Thyroid gland (tissue), 4 donors: ENCODE measurements at regions of chr6 and their contacts with region 1.

Region 1: GRCh38 chr6:170295510-170296422 is 4.9 kb upstream of the DLL1 start:
- DNase-seq: peak in 1 of 2 donors; percentile 20
- H3K4me3 ChIP-seq: peak overlapping the region; percentile 15 to 48 (median 16)
- H3K27ac ChIP-seq: no peak overlapping the region
- H3K4me1 ChIP-seq: peaks cover 35 to 43% of the 10 kb centered on the region in 2 donors
- H3K27me3 ChIP-seq: peaks cover 24% of the 10 kb centered on the region
- CTCF ChIP-seq: no peak
- POLR2A ChIP-seq: no peak

Region 2: GRCh38 chr6:169864148-169865020 is 431.4 kb before region 1 on chr6:
- intact Hi-C with region 1: no loop called
- DNase-seq: peak; percentile 14 to 19
- H3K4me3 ChIP-seq: no peak overlapping the region
- H3K27ac ChIP-seq: no peak overlapping the region
- H3K4me1 ChIP-seq: no peaks in the 10 kb centered on the region
- H3K27me3 ChIP-seq: no peaks in the 10 kb centered on the region
- CTCF ChIP-seq: no peak
- POLR2A ChIP-seq: no peak

Region 3: GRCh38 chr6:169959136-169960002 is 336.4 kb before region 1 on chr6:
- intact Hi-C with region 1: loop called (anchors 10 kb)
- DNase-seq: peak; percentile 22 to 25
- H3K4me3 ChIP-seq: no peak overlapping the region
- H3K27ac ChIP-seq: no peak overlapping the region
- H3K4me1 ChIP-seq: peaks cover 0 to 22% of the 10 kb centered on the region in 2 donors
- H3K27me3 ChIP-seq: no peaks in the 10 kb centered on the region
- CTCF ChIP-seq: peak in 1 of 6 experiments; percentile 9
- POLR2A ChIP-seq: no peak